Activated T-helper 1 cell treated with anti-CD3 and anti-CD28 coated beads, Interleukin-12 subunit alpha, Interleukin-12 subunit beta, Interleukin-2, Interleukin-4 antibody, amounts not matched to agents 30 ng/mL and 10 ng/mL and 1 ng/mL, durations not matched to agents 14 hours and 24 hours and 36 hours (primary cell): ENCODE measurements at regions of chr1 and their contacts with region 1.

Region 1: GRCh38 chr1:155308493-155309422 is at the start of gene FDPS:
- DNase-seq: peak; percentile 98
- H3K4me3 Mint-ChIP-seq: peak within 1 kb of the TSS; percentile 92
- H3K27ac Mint-ChIP-seq: peak within 1 kb of the TSS; percentile 93
- H3K4me1 Mint-ChIP-seq: peaks cover 38% of the 10 kb centered on the region
- H3K27me3 Mint-ChIP-seq: no peaks in the 10 kb centered on the region
- total RNA-seq, gene FDPS: 274 and 289 TPM in 2 replicates

Region 2: GRCh38 chr1:155250633-155251449 is 57.9 kb before region 1 on chr1:
- intact Hi-C with region 1: loop called (anchors 1 kb)
- DNase-seq: peak; percentile 92
- H3K4me3 Mint-ChIP-seq: peak overlapping the region; percentile 12
- H3K27ac Mint-ChIP-seq: no peak overlapping the region
- H3K4me1 Mint-ChIP-seq: peaks cover 32% of the 10 kb centered on the region
- H3K27me3 Mint-ChIP-seq: no peaks in the 10 kb centered on the region

Region 3: GRCh38 chr1:155540000-155540874 is 231.5 kb after region 1 on chr1:
- intact Hi-C with region 1: loop called (anchors 1 kb)
- DNase-seq: no peak
- H3K4me3 Mint-ChIP-seq: peak overlapping the region; percentile 49
- H3K27ac Mint-ChIP-seq: peak overlapping the region; percentile 93
- H3K4me1 Mint-ChIP-seq: peaks cover 54% of the 10 kb centered on the region
- H3K27me3 Mint-ChIP-seq: no peaks in the 10 kb centered on the region

Region 4: GRCh38 chr1:155688324-155689080 is 379.7 kb after region 1 on chr1 and contains the start of gene YY1AP1:
- intact Hi-C with region 1: loop called (anchors 2 kb)
- DNase-seq: peak; percentile 88
- H3K4me3 Mint-ChIP-seq: peak within 1 kb of the TSS; percentile 95
- H3K27ac Mint-ChIP-seq: peak within 1 kb of the TSS; percentile 96
- H3K4me1 Mint-ChIP-seq: peaks cover 62% of the 10 kb centered on the region
- H3K27me3 Mint-ChIP-seq: peaks cover 3% of the 10 kb centered on the region
- total RNA-seq, gene YY1AP1: 62.2 and 64.4 TPM in 2 replicates